ENCODE measurements at regions of chr17 and their contacts with region 1.

Region 1: DNA sequence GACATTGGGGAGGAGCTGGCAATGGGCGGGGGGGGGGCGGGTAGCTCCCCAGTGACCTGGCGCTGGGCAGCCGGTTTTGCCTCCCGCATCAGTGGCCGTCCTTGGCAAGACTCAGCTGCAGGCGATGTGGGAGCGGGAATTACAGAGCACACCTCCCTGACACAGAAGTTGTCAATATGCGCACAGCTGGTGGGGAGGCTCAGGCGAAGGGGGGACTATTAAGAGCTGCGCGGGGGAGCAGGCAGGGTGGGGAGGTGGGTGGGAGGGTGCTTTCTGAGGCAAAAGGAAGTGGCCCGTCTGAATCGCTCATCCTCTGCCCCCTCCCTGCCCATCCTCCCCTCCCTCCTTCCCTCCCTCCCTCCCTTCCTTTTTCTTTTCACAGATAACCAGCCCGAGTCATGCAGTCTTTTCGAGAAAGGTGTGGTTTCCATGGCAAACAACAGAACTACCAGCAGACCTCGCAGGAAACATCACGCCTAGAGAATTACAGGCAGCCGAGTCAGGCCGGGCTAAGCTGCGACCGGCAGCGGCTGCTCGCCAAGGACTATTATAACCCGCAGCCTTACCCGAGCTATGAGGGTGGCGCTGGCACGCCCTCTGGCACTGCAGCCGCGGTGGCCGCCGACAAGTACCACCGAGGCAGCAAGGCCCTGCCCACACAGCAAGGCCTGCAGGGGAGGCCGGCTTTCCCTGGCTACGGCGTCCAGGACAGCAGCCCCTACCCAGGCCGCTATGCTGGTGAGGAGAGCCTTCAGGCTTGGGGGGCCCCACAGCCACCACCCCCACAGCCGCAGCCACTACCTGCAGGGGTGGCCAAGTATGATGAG is 44.0 kb downstream of the SREBF1 start:
- DNase-seq: peak; percentile 26 to 91 (median 56)
- ATAC-seq: peak; percentile 86
- H3K4me3 ChIP-seq: peak overlapping the region; percentile 22
- H3K4me3 Mint-ChIP-seq: peak overlapping the region; percentile 75
- H3K27ac ChIP-seq: peak overlapping the region; percentile 44 to 47
- H3K27ac Mint-ChIP-seq: peak overlapping the region; percentile 71
- H3K4me1 ChIP-seq: peaks cover 32% of the 10 kb centered on the region
- H3K4me1 Mint-ChIP-seq: peaks cover 25% of the 10 kb centered on the region
- H3K27me3 ChIP-seq: no peaks in the 10 kb centered on the region
- H3K27me3 Mint-ChIP-seq: no peaks in the 10 kb centered on the region
- CTCF ChIP-seq: no peak

Region 2: GRCh38 chr17:17757391-17757791 is 35.4 kb before region 1 on chr17:
- CTCF ChIA-PET with region 1: no interaction called
- POLR2A ChIA-PET with region 1: interaction called, 4 read pairs
- intact Hi-C with region 1: loop called (anchors 5 kb)
- DNase-seq: peak in 9 of 14 experiments; percentile 19 to 65 (median 50)
- ATAC-seq: peak; percentile 67
- H3K4me3 ChIP-seq: peak overlapping the region; percentile 16
- H3K4me3 Mint-ChIP-seq: peak overlapping the region; percentile 84
- H3K27ac ChIP-seq: peak overlapping the region; percentile 22 to 51
- H3K27ac Mint-ChIP-seq: peak overlapping the region; percentile 91
- H3K4me1 ChIP-seq: peaks cover 65% of the 10 kb centered on the region
- H3K4me1 Mint-ChIP-seq: peaks cover 68% of the 10 kb centered on the region
- H3K27me3 ChIP-seq: no peaks in the 10 kb centered on the region
- H3K27me3 Mint-ChIP-seq: no peaks in the 10 kb centered on the region
- CTCF ChIP-seq: no peak